ENCODE measurements at regions of chr22 and their contacts with region 1.

Region 1: GRCh38 chr22:49599039-49599438 is 228.6 kb downstream of the BRD1 start:
- DNase-seq: no peak
- H3K4me3 ChIP-seq: no peak overlapping the region
- H3K27ac ChIP-seq: no peak overlapping the region
- H3K4me1 ChIP-seq: no peaks in the 10 kb centered on the region
- H3K27me3 ChIP-seq: no peaks in the 10 kb centered on the region
- CTCF ChIP-seq: no peak
- EP300 ChIP-seq: no peak
- POLR2A ChIP-seq: no peak

Region 2: DNA sequence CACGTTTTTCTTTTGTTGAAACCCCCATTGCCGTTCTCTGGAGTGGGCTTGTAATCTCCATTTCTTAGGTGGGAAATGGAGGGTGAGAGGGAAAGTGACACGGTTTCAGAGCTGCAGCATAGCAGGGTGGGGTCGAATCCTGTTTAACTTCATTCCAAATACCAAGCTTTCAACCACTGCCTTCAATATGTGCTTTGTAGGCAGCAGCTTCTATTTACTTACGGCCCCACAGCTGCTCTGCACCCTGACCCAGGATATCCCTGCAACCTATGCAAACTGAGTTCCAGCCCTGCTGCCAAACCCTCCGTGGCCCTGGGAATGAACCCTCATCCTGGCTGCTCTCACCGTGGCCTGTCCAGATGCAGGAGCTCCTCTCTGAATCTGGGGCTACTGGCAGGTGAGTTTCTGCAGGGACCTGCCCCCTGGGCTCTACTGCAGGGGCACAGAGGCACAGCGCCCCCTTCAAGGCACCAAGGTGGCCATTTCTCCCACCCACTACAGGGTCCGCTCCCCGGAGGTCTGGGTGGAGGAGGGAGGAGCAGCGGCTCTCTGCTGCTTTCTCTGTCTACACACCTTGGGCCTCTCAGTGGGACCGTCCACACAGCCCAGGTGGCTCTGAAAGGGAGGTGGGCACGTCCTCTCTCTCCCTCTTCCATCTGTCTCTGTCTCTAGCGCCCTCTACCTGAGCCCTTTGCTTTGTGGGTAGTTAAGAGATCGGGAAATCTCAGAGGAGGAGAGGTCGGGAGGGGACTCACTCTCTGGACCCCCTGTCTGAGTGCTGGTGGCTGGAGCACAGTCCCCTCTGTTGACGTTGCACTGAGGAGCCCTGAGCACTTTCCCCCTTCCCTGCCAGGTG is 50.5 kb before region 1 on chr22:
- intact Hi-C with region 1: loop called in 1 of 4 experiments (anchors 10 kb)
- DNase-seq: peak in 1 of 5 donors; percentile 3
- H3K4me3 ChIP-seq: no peak overlapping the region
- H3K27ac ChIP-seq: no peak overlapping the region
- H3K4me1 ChIP-seq: no peaks in the 10 kb centered on the region
- H3K27me3 ChIP-seq: no peaks in the 10 kb centered on the region
- CTCF ChIP-seq: no peak
- EP300 ChIP-seq: no peak
- POLR2A ChIP-seq: no peak

Region 3: GRCh38 chr22:49657275-49657975 is 58.4 kb after region 1 on chr22:
- intact Hi-C with region 1: loop called in 1 of 4 experiments (anchors 10 kb)
- DNase-seq: peak in 2 of 5 donors; percentile 37 to 55
- H3K4me3 ChIP-seq: peak overlapping the region; percentile 22
- H3K27ac ChIP-seq: no peak overlapping the region
- H3K4me1 ChIP-seq: no peaks in the 10 kb centered on the region
- H3K27me3 ChIP-seq: no peaks in the 10 kb centered on the region
- CTCF ChIP-seq: no peak
- EP300 ChIP-seq: no peak
- POLR2A ChIP-seq: no peak

Region 4: DNA sequence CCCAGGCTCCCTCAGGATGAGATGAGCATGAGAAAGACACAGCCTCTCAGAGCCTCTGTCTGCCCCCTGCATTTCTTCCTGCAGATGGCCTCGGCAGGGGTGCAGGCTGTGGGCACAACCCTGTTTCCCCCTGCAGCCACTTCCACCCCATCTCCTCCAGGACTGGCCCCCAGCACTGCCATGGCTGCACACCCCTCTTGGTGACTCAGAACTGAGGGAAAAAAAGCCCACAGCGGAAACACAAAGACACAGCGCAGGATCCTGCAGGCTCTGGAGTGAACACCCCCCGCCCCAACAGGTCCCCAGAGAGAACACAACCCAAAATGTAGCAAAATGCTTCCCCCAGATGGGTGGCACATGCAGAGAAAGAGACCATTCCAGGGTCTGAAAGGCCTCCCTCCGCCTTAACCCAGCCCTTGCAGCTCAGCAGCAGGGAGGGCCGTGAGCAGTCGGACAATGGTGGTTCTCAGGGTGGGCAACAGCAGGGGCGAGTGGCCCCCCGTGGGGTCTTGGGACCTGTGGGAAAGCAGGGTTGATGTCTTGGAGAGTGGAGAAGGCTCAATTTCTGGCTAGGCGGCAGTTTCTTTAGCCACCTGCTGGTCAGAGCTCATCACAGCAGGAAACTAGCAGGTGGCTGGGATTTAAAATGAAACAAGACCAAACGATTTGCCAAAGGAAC is 637.8 kb after region 1 on chr22:
- intact Hi-C with region 1: no loop called
- DNase-seq: no peak
- H3K4me3 ChIP-seq: no peak overlapping the region
- H3K27ac ChIP-seq: no peak overlapping the region
- H3K4me1 ChIP-seq: peaks cover 3% of the 10 kb centered on the region
- H3K27me3 ChIP-seq: no peaks in the 10 kb centered on the region
- CTCF ChIP-seq: no peak
- EP300 ChIP-seq: no peak
- POLR2A ChIP-seq: no peak